ENCODE measurements at regions of chr5 and their contacts with region 1.

Region 1: DNA sequence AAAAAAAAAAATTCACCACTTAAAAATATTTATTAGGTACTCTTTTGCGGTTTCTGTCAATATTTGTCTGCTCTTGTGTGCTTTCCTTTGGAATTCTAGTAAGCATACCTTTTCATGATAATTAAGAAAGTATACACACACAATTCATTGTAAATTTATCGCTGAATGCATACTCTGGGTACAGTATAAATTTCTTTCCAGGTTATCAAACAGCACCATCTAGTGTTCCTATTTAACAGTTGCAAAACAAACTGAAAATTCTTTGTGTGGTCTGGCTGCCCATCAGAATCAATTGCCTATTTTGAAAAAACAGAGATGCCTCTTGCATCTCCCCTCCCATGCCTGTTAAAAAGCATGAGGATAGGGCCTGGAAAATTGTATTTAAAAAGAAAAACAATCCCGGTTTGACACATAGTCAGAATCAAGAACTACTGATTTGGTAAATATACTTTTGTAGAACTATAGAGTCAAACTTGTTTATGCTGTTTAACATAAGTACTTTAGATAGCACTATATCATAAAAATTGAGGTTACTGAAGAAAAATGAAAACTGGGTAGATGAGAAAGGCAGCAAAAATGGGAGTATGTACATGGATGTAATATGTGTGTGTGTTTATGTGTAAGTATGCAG is 16.2 kb downstream of the PGGT1B start:
- DNase-seq: peak; percentile 42
- H3K4me3 ChIP-seq: peak overlapping the region in 1 of 2 experiments; percentile 23; a peak in 1 of 4 replicates
- H3K27ac ChIP-seq: no peak overlapping the region; a peak in 1 of 4 replicates
- H3K4me1 ChIP-seq: peaks cover 0 to 3% of the 10 kb centered on the region in 2 experiments; a peak in 1 of 4 replicates
- H3K27me3 ChIP-seq: no peaks in the 10 kb centered on the region
- CTCF ChIP-seq: peak; percentile 87
- EP300 ChIP-seq: no peak
- RAD21 ChIP-seq: peak; percentile 89

Region 2: DNA sequence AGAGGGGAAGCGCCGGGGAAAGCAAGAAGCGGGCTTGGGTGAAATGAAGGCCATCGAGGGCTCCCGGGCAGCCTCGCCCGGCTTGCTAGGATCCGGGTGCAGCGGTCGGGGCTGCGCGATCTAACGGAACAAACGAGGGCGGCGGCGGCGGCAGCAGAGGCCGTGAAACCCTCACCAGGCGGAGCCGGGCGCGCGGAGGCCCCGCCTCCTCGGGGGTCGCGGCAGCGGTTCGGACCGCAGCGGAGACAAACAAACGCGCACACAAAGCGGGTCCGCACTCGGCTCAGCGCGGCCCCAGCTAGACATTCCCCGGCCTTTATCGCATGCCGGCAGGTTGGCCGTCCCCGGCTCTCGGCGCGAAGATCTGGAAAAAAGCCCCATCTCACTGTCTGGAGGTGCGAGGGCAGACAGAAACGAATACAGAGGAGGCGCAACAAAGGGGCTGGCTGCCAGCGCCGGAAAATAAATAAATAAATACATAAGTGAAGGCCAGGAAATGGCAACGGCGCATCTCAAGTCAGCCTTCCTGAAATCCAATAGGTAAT is 66.2 kb before region 1 on chr5:
- CTCF ChIA-PET with region 1: interaction called, 10 read pairs
- POLR2A ChIA-PET with region 1: no interaction called
- DNase-seq: peak; percentile 94
- H3K4me3 ChIP-seq: peak overlapping the region; percentile 53 to 66
- H3K27ac ChIP-seq: peak overlapping the region in 1 of 2 experiments; percentile 83; a peak in 2 of 4 replicates
- H3K4me1 ChIP-seq: peaks cover 0 to 2% of the 10 kb centered on the region in 2 experiments; a peak in 1 of 4 replicates
- H3K27me3 ChIP-seq: peaks cover 32% of the 10 kb centered on the region
- CTCF ChIP-seq: no peak
- EP300 ChIP-seq: no peak
- RAD21 ChIP-seq: no peak

Region 3: DNA sequence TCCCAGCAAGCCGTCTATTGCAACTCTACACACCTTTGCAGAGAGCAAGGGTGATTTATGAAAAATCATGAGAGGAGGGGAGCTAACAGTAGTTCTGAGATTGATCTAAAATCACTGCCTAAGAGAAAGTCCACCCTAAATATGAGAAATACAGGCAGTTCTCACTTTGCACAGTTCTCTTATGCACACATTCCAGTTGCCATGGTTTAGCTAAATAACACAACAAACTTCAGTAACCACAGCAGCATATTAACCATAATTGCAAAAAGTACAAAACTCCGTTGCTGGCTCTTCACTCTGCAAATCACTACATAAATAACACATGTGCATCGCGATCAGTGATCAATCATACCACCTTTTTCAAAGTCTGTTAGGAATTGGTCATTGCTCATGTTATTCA is 14.9 kb before region 1 on chr5:
- CTCF ChIA-PET with region 1: interaction called, 19 read pairs
- POLR2A ChIA-PET with region 1: no interaction called
- DNase-seq: no peak
- H3K4me3 ChIP-seq: no peak overlapping the region
- H3K27ac ChIP-seq: no peak overlapping the region
- H3K4me1 ChIP-seq: no peaks in the 10 kb centered on the region
- H3K27me3 ChIP-seq: no peaks in the 10 kb centered on the region
- CTCF ChIP-seq: no peak
- EP300 ChIP-seq: no peak
- RAD21 ChIP-seq: no peak

Region 4: GRCh38 chr5:115329475-115329874 is 83.0 kb after region 1 on chr5:
- CTCF ChIA-PET with region 1: no interaction called
- POLR2A ChIA-PET with region 1: no interaction called
- DNase-seq: no peak
- H3K4me3 ChIP-seq: no peak overlapping the region
- H3K27ac ChIP-seq: no peak overlapping the region
- H3K4me1 ChIP-seq: no peaks in the 10 kb centered on the region
- H3K27me3 ChIP-seq: no peaks in the 10 kb centered on the region
- CTCF ChIP-seq: no peak
- EP300 ChIP-seq: no peak
- RAD21 ChIP-seq: no peak

Region 5: DNA sequence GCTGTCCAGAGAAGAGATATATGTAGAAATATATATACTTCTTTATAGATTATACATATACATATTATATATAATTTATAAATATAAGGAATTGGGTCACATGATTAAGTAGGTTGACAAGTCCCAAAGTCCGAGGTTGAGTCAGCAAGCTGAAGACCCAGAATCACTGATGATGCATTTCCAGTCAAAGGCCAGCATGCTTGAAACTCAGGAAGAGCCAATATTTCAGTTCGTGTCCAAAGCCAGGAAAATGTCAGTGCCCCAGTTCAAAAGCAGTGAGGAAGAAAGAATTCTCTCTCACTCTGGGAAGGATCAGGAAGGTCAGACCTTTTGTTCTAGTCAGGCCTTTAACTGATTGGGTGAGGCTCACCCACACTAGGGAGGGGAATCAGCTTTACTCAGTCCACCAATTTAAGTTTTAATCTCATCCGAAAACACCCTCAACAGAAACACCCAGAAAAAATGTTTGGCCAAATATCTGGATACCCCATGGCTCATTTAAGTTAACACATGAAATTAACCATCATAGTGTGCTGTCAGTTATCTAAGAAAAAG is 673.8 kb after region 1 on chr5:
- CTCF ChIA-PET with region 1: no interaction called
- POLR2A ChIA-PET with region 1: no interaction called
- DNase-seq: no peak
- H3K4me3 ChIP-seq: no peak overlapping the region
- H3K27ac ChIP-seq: no peak overlapping the region
- H3K4me1 ChIP-seq: no peaks in the 10 kb centered on the region
- H3K27me3 ChIP-seq: no peaks in the 10 kb centered on the region
- CTCF ChIP-seq: no peak
- EP300 ChIP-seq: no peak
- RAD21 ChIP-seq: no peak